ENCODE measurements at regions of chr10 and their contacts with region 1.

Region 1: DNA sequence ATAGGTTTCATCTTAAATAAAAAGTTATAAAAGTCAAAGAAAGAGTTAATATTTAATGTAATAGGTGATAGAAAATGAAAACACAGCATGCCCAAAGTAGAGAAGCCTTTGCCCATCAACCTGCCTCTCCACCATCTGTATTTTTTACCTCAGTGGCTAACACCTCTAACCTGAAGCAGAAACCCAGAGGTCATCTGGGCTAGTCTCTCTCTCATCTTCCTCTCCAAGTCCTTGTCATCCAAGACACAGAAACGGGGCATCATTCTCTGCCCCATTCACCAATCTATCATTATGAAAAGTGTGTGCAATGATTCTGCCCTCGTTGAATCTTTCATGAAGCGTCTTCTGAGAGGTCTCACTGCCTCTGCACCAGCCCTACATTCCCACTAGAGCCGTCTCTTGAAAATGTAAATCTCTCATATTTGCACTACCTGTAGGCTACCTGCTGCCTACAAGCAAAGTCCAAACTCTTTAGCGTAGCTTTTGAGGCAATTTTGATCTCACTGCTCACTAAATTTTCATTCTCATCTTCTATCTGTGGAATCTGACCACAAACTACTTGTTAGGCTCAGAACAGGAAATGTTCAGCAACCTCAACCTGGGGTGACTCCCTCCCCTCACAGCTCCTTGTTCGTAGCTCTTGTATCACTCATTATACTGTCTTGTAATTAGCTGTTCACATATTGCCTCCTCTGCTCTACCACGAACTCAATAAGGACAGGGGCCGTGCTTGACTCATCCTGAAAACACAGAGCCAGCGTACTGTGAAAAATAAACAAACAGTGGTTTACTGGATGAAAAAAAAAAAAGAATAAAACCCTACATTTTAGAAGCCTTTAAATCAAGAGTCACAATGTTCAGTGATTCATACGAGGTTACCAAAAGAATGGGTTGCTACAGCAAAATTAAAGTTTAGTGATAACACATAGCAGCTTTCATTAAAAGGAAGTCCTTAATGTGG is 83.1 kb downstream of the CTNNA3 start:
- DNase-seq: peak; percentile 82
- H3K4me3 Mint-ChIP-seq: peak overlapping the region; percentile 2
- H3K27ac Mint-ChIP-seq: peak overlapping the region; percentile 65
- H3K4me1 Mint-ChIP-seq: peaks cover 25% of the 10 kb centered on the region
- H3K27me3 Mint-ChIP-seq: no peaks in the 10 kb centered on the region

Region 2: GRCh38 chr10:67764012-67764822 is 151.4 kb after region 1 on chr10:
- CTCF ChIA-PET with region 1: no interaction called
- POLR2A ChIA-PET with region 1: no interaction called
- intact Hi-C with region 1: loop called (anchors 1 kb)
- DNase-seq: peak; percentile 98
- H3K4me3 Mint-ChIP-seq: peak overlapping the region; percentile 78
- H3K27ac Mint-ChIP-seq: peak overlapping the region; percentile 91
- H3K4me1 Mint-ChIP-seq: peaks cover 11% of the 10 kb centered on the region
- H3K27me3 Mint-ChIP-seq: peaks cover 4% of the 10 kb centered on the region

Region 3: GRCh38 chr10:67772894-67773511 is 160.1 kb after region 1 on chr10:
- CTCF ChIA-PET with region 1: no interaction called
- POLR2A ChIA-PET with region 1: interaction called, 3 read pairs
- intact Hi-C with region 1: loop called (anchors 1 kb)
- DNase-seq: no peak
- H3K4me3 Mint-ChIP-seq: no peak overlapping the region
- H3K27ac Mint-ChIP-seq: no peak overlapping the region
- H3K4me1 Mint-ChIP-seq: peaks cover 15% of the 10 kb centered on the region
- H3K27me3 Mint-ChIP-seq: no peaks in the 10 kb centered on the region

Region 4: GRCh38 chr10:67815571-67816059 is 202.8 kb after region 1 on chr10:
- CTCF ChIA-PET with region 1: no interaction called
- POLR2A ChIA-PET with region 1: no interaction called
- intact Hi-C with region 1: loop called (anchors 1 kb)
- DNase-seq: no peak
- H3K4me3 Mint-ChIP-seq: no peak overlapping the region
- H3K27ac Mint-ChIP-seq: peak overlapping the region; percentile 76
- H3K4me1 Mint-ChIP-seq: peaks cover 28% of the 10 kb centered on the region
- H3K27me3 Mint-ChIP-seq: peaks cover 3% of the 10 kb centered on the region

Region 5: GRCh38 chr10:67861750-67862460 is 249.0 kb after region 1 on chr10:
- CTCF ChIA-PET with region 1: no interaction called
- POLR2A ChIA-PET with region 1: no interaction called
- intact Hi-C with region 1: no loop called
- DNase-seq: no peak
- H3K4me3 Mint-ChIP-seq: no peak overlapping the region
- H3K27ac Mint-ChIP-seq: no peak overlapping the region
- H3K4me1 Mint-ChIP-seq: no peaks in the 10 kb centered on the region
- H3K27me3 Mint-ChIP-seq: no peaks in the 10 kb centered on the region

Region 6: GRCh38 chr10:68196701-68197100 is 583.8 kb after region 1 on chr10:
- CTCF ChIA-PET with region 1: no interaction called
- POLR2A ChIA-PET with region 1: no interaction called
- intact Hi-C with region 1: no loop called
- DNase-seq: no peak
- H3K4me3 Mint-ChIP-seq: no peak overlapping the region
- H3K27ac Mint-ChIP-seq: no peak overlapping the region
- H3K4me1 Mint-ChIP-seq: no peaks in the 10 kb centered on the region
- H3K27me3 Mint-ChIP-seq: peaks cover 29% of the 10 kb centered on the region